IMR-90 (cell line): ENCODE measurements at regions of chr5 and their contacts with region 1.

Region 1: DNA sequence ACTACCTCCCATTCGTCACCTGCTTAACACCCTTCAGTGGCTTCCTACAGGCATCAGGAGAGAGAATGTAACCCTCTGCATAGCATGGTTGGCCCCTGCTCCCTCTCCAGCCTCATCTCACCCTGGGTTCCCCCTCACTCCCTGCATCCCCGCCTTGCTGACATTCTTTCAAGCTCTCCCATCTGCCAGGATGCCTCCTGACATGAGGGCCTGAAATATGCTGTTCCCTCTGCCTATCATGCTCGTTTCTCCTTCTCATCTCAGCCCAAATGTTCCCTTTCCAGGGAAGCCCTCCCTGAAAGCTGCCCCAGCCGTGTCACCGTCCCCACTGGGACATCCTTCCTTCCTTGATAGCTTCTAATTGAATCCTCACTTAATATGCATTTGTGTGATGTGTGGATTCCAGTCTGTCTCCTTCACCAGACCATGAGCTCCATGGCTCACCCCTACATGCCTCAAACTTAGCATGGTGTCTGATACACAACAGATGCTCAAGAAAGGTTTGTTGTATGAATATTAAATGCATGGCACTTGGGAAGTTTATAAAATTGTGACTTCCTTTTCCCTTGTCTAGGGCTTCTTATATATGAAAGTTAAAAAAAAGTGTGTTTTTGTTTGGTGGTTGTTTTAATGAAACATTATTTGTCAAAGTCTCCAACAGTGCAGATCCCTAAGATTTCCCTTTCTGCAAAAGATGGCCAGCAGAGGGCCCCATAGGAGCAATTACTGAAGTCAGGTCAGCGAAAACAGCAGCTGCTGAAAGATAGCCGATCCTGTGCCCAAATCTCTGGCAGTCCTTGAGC is 7.3 kb upstream of the C5orf58 start:
- DNase-seq: peak; percentile 39
- ATAC-seq: peak; percentile 90
- H3K4me3 ChIP-seq: no peak overlapping the region
- H3K27ac ChIP-seq: no peak overlapping the region
- H3K4me1 ChIP-seq: no peaks in the 10 kb centered on the region
- H3K27me3 ChIP-seq: no peaks in the 10 kb centered on the region
- CTCF ChIP-seq: peak; percentile 70
- POLR2A ChIP-seq: no peak
- RAD21 ChIP-seq: peak; percentile 60

Region 2: GRCh38 chr5:170010269-170010994 is 215.1 kb before region 1 on chr5:
- CTCF ChIA-PET with region 1: no interaction called
- POLR2A ChIA-PET with region 1: no interaction called
- dilution Hi-C with region 1: no loop called
- in situ Hi-C with region 1: no loop called
- intact Hi-C with region 1: no loop called
- DNase-seq: no peak
- ATAC-seq: no peak
- H3K4me3 ChIP-seq: no peak overlapping the region
- H3K27ac ChIP-seq: no peak overlapping the region
- H3K4me1 ChIP-seq: no peaks in the 10 kb centered on the region
- H3K27me3 ChIP-seq: peaks cover 8% of the 10 kb centered on the region
- CTCF ChIP-seq: no peak
- POLR2A ChIP-seq: no peak
- RAD21 ChIP-seq: no peak

Region 3: DNA sequence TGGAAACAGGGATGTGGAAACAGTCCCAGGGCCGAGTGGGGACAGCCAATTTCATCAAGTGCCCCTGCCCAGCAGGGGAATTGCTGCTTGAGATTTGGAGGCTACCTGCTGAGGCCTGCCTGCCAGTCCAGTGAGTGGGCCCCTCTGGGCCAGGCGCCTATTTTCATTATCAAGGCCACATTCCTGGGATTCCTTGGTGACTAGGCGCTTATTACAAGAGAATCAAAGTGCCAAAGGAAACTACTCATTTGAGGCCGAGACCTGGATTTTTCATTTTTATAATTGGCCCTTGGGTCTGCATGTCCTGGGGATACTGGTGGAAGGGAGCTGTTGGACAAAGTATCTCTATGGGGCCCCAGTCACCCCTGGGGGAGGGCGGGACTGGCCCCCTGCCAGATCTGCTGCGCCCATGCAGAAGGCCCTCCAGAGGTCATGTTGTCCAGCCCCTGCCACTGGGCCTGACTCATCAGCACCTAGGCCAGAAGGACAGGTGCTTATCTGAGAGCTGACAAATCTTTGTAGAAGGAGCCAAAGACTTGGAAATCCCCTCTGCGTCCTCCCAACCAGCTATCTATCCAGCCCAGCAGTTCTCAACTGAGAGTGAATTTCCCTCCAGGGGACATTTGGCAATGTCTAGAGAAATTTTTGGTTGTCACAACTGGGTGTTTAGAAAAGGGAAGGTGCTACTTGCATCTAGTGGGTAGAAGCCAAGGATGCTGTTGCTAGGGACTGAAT is 74.3 kb before region 1 on chr5:
- CTCF ChIA-PET with region 1: no interaction called
- POLR2A ChIA-PET with region 1: no interaction called
- dilution Hi-C with region 1: no loop called
- in situ Hi-C with region 1: no loop called
- intact Hi-C with region 1: loop called (anchors 2 kb)
- DNase-seq: peak; percentile 44
- ATAC-seq: peak; percentile 67
- H3K4me3 ChIP-seq: no peak overlapping the region
- H3K27ac ChIP-seq: no peak overlapping the region
- H3K4me1 ChIP-seq: peaks cover 7% of the 10 kb centered on the region; the same call in 1 of the 2 replicates
- H3K27me3 ChIP-seq: no peaks in the 10 kb centered on the region
- CTCF ChIP-seq: no peak
- POLR2A ChIP-seq: no peak
- RAD21 ChIP-seq: no peak

Region 4: GRCh38 chr5:170246126-170246883 is 20.8 kb after region 1 on chr5:
- CTCF ChIA-PET with region 1: no interaction called
- POLR2A ChIA-PET with region 1: no interaction called
- dilution Hi-C with region 1: no loop called
- in situ Hi-C with region 1: no loop called
- intact Hi-C with region 1: no loop called
- DNase-seq: no peak
- ATAC-seq: no peak
- H3K4me3 ChIP-seq: no peak overlapping the region
- H3K27ac ChIP-seq: no peak overlapping the region
- H3K4me1 ChIP-seq: no peaks in the 10 kb centered on the region
- H3K27me3 ChIP-seq: no peaks in the 10 kb centered on the region
- CTCF ChIP-seq: no peak
- POLR2A ChIP-seq: no peak
- RAD21 ChIP-seq: no peak

Region 5: GRCh38 chr5:170464280-170465127 is 239.0 kb after region 1 on chr5:
- CTCF ChIA-PET with region 1: no interaction called
- POLR2A ChIA-PET with region 1: no interaction called
- dilution Hi-C with region 1: no loop called
- in situ Hi-C with region 1: no loop called
- intact Hi-C with region 1: no loop called
- DNase-seq: no peak
- ATAC-seq: no peak
- H3K4me3 ChIP-seq: no peak overlapping the region
- H3K27ac ChIP-seq: no peak overlapping the region
- H3K4me1 ChIP-seq: no peaks in the 10 kb centered on the region
- H3K27me3 ChIP-seq: no peaks in the 10 kb centered on the region; the same call in 1 of the 2 replicates
- CTCF ChIP-seq: no peak
- POLR2A ChIP-seq: no peak
- RAD21 ChIP-seq: no peak